ENCODE measurements at regions of chr12 and their contacts with region 1.

Region 1: GRCh38 chr12:19739183-19739776 is 300.0 kb downstream of the AEBP2 start:
- DNase-seq: peak in 1 of 2 experiments; percentile 59
- H3K4me3 ChIP-seq: no peak overlapping the region
- H3K4me3 Mint-ChIP-seq: no peak overlapping the region
- H3K27ac Mint-ChIP-seq: no peak overlapping the region
- H3K4me1 ChIP-seq: no peaks in the 10 kb centered on the region
- H3K4me1 Mint-ChIP-seq: no peaks in the 10 kb centered on the region
- H3K27me3 ChIP-seq: no peaks in the 10 kb centered on the region
- H3K27me3 Mint-ChIP-seq: peaks cover 4% of the 10 kb centered on the region
- CTCF ChIP-seq: peak; percentile 72 to 77

Region 2: DNA sequence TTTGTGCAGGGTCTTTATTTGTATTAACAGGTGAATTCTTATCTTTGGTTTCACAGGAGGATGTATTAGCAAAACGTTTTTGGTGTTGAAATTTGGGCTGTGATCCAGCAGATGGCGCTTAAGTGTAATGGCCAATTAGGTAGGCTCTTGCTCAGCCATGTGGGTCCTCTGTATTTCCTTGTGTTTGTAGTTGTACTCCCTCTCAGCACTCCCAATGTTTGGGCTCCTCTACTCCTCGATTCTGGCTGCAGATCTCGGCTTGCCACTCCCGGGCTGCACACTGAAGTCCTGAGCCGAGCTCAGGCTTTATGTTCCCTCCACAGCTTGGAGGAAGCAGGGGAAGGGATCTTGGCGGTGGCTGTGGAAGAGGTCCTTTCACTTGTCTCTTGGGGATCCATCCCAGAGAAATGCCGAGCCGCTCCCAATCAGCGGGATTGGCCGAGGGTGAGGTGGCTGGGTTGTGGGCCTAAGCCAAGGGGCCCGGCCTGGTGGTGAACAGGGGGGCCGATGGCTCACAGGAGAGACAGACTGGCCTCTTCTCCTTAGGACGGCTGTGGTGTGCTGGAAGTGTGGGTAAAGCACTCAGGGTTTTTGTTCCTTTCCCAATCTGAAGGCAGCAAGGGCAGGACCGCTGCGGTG is 166.2 kb before region 1 on chr12:
- CTCF ChIA-PET with region 1: no interaction called
- POLR2A ChIA-PET with region 1: no interaction called
- intact Hi-C with region 1: no loop called
- DNase-seq: peak; percentile 55 to 62
- H3K4me3 ChIP-seq: no peak overlapping the region
- H3K4me3 Mint-ChIP-seq: no peak overlapping the region
- H3K27ac Mint-ChIP-seq: no peak overlapping the region
- H3K4me1 ChIP-seq: 0 out of 2 replicates have a peak, but pooled peaks cover 6% of the 10 kb centered on the region
- H3K4me1 Mint-ChIP-seq: peaks cover 7% of the 10 kb centered on the region
- H3K27me3 ChIP-seq: no peaks in the 10 kb centered on the region
- H3K27me3 Mint-ChIP-seq: no peaks in the 10 kb centered on the region
- CTCF ChIP-seq: peak; percentile 56 to 76

Region 3: DNA sequence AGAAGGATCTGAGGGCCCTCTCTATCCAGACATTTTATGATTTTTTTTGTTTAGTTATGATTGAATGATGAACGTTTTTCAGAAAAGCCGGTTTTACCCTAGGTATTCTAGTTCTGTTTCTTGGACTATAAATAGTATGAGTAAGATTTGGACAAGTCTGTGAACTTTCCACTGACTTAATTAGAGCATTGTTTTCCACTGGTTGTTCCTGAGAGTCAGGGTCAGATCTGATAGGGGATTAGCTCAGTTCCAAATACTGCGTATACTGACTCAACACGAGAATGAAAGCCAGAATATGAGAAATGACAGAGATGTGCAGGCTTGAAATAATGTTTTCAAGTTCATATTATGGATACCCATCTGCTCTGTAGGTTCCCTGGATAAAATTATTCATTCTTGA is 61.6 kb after region 1 on chr12:
- CTCF ChIA-PET with region 1: no interaction called
- POLR2A ChIA-PET with region 1: no interaction called
- intact Hi-C with region 1: no loop called
- DNase-seq: no peak
- H3K4me3 ChIP-seq: no peak overlapping the region
- H3K4me3 Mint-ChIP-seq: no peak overlapping the region
- H3K27ac Mint-ChIP-seq: no peak overlapping the region
- H3K4me1 ChIP-seq: no peaks in the 10 kb centered on the region
- H3K4me1 Mint-ChIP-seq: no peaks in the 10 kb centered on the region
- H3K27me3 ChIP-seq: no peaks in the 10 kb centered on the region
- H3K27me3 Mint-ChIP-seq: no peaks in the 10 kb centered on the region
- CTCF ChIP-seq: no peak

Region 4: DNA sequence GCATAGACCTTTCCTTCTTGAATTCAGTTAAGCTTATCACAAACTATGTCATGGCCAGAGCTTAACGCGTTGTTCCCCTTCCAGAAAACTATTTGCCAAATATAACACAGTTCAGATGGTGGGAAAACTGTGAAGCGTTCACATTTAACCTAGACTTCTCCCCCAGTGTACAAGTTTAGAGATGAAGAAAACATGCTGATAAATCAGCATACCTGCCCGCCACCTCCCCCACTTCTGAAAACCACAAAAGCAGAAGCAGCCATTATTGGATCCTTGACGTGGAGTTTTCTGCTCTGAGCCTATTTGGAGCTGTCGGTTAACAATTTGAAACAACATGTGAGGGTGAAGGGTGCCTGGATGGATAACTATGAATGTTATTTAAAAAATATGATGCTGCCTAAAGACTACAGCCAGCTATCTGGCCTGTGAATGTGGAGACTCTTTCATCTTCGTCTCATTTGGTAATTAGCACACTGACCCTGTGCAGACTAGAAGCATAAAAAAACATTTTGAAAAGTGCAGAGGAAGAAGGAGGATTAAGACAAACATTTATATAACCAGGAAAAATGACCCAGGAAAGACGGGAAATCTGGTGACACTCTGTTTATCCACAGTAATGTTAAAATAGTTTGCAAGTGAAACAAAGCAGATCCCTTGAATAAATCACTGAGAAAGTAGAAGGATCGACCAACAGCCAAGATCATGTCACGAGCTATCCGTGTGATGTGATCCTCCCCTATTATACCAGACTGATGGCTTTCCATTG is 108.2 kb after region 1 on chr12:
- CTCF ChIA-PET with region 1: no interaction called
- POLR2A ChIA-PET with region 1: no interaction called
- intact Hi-C with region 1: no loop called
- DNase-seq: no peak
- H3K4me3 ChIP-seq: no peak overlapping the region
- H3K4me3 Mint-ChIP-seq: no peak overlapping the region
- H3K27ac Mint-ChIP-seq: no peak overlapping the region
- H3K4me1 ChIP-seq: no peaks in the 10 kb centered on the region
- H3K4me1 Mint-ChIP-seq: peaks cover 7% of the 10 kb centered on the region
- H3K27me3 ChIP-seq: no peaks in the 10 kb centered on the region
- H3K27me3 Mint-ChIP-seq: no peaks in the 10 kb centered on the region
- CTCF ChIP-seq: no peak

Region 5: GRCh38 chr12:19893514-19893913 is 154.2 kb after region 1 on chr12:
- CTCF ChIA-PET with region 1: no interaction called
- POLR2A ChIA-PET with region 1: no interaction called
- intact Hi-C with region 1: loop called (anchors 1 kb)
- DNase-seq: peak in 1 of 2 experiments; percentile 17
- H3K4me3 ChIP-seq: no peak overlapping the region
- H3K4me3 Mint-ChIP-seq: no peak overlapping the region
- H3K27ac Mint-ChIP-seq: no peak overlapping the region
- H3K4me1 ChIP-seq: no peaks in the 10 kb centered on the region
- H3K4me1 Mint-ChIP-seq: no peaks in the 10 kb centered on the region
- H3K27me3 ChIP-seq: no peaks in the 10 kb centered on the region
- H3K27me3 Mint-ChIP-seq: no peaks in the 10 kb centered on the region
- CTCF ChIP-seq: peak; percentile 21 to 31

Region 6: DNA sequence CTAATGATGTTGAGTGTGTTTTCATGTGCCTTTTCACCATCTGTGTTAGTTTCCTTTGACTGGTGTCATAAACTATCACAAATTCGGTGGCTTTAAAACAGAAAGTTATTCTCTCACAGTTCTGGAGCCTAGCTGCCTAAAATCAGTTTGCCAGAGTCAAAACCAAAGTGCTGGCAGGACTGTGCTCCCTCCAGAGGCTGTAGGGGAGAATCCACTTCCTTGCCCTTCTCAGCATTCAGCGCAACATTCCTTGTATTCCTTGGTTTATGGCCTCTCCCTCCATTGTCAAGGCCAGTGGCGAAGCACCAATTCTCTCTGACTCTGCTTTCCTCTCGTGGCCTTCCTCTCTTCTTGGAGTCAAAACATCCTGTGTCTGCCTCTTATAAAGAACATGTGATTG is 454.9 kb after region 1 on chr12:
- CTCF ChIA-PET with region 1: no interaction called
- POLR2A ChIA-PET with region 1: no interaction called
- intact Hi-C with region 1: loop called (anchors 1 kb)
- DNase-seq: peak; percentile 49 to 62
- H3K4me3 ChIP-seq: no peak overlapping the region
- H3K4me3 Mint-ChIP-seq: no peak overlapping the region
- H3K27ac Mint-ChIP-seq: no peak overlapping the region
- H3K4me1 ChIP-seq: peaks cover 11% of the 10 kb centered on the region
- H3K4me1 Mint-ChIP-seq: peaks cover 20% of the 10 kb centered on the region
- H3K27me3 ChIP-seq: no peaks in the 10 kb centered on the region
- H3K27me3 Mint-ChIP-seq: no peaks in the 10 kb centered on the region
- CTCF ChIP-seq: peak; percentile 44 to 69

Region 7: GRCh38 chr12:20220339-20220738 is 481.1 kb after region 1 on chr12:
- CTCF ChIA-PET with region 1: no interaction called
- POLR2A ChIA-PET with region 1: no interaction called
- intact Hi-C with region 1: loop called (anchors 1 kb)
- DNase-seq: peak; percentile 46 to 47
- H3K4me3 ChIP-seq: no peak overlapping the region
- H3K4me3 Mint-ChIP-seq: no peak overlapping the region
- H3K27ac Mint-ChIP-seq: no peak overlapping the region
- H3K4me1 ChIP-seq: no peaks in the 10 kb centered on the region
- H3K4me1 Mint-ChIP-seq: no peaks in the 10 kb centered on the region
- H3K27me3 ChIP-seq: no peaks in the 10 kb centered on the region
- H3K27me3 Mint-ChIP-seq: no peaks in the 10 kb centered on the region
- CTCF ChIP-seq: peak; percentile 41 to 53

Region 8: GRCh38 chr12:20376984-20377383 is 637.7 kb after region 1 on chr12:
- CTCF ChIA-PET with region 1: interaction called, 3 read pairs
- POLR2A ChIA-PET with region 1: no interaction called
- intact Hi-C with region 1: loop called (anchors 1 kb)
- DNase-seq: peak in 1 of 2 experiments; percentile 22
- H3K4me3 ChIP-seq: no peak overlapping the region
- H3K4me3 Mint-ChIP-seq: no peak overlapping the region
- H3K27ac Mint-ChIP-seq: no peak overlapping the region
- H3K4me1 ChIP-seq: peaks cover 4% of the 10 kb centered on the region; the same call in 1 of the 2 replicates
- H3K4me1 Mint-ChIP-seq: no peaks in the 10 kb centered on the region
- H3K27me3 ChIP-seq: no peaks in the 10 kb centered on the region
- H3K27me3 Mint-ChIP-seq: peaks cover 11% of the 10 kb centered on the region
- CTCF ChIP-seq: peak; percentile 14 to 54

Region 9: GRCh38 chr12:20549107-20549719 is 809.9 kb after region 1 on chr12:
- CTCF ChIA-PET with region 1: no interaction called
- POLR2A ChIA-PET with region 1: no interaction called
- intact Hi-C with region 1: loop called (anchors 1 kb)
- DNase-seq: peak; percentile 42 to 60
- H3K4me3 ChIP-seq: no peak overlapping the region
- H3K4me3 Mint-ChIP-seq: no peak overlapping the region
- H3K27ac Mint-ChIP-seq: no peak overlapping the region
- H3K4me1 ChIP-seq: no peaks in the 10 kb centered on the region
- H3K4me1 Mint-ChIP-seq: no peaks in the 10 kb centered on the region
- H3K27me3 ChIP-seq: no peaks in the 10 kb centered on the region
- H3K27me3 Mint-ChIP-seq: peaks cover 3% of the 10 kb centered on the region
- CTCF ChIP-seq: peak; percentile 66 to 74

Region 10: GRCh38 chr12:20601668-20602280 is 862.5 kb after region 1 on chr12:
- CTCF ChIA-PET with region 1: no interaction called
- POLR2A ChIA-PET with region 1: no interaction called
- intact Hi-C with region 1: loop called (anchors 1 kb)
- DNase-seq: peak in 1 of 2 experiments; percentile 17
- H3K4me3 ChIP-seq: no peak overlapping the region
- H3K4me3 Mint-ChIP-seq: no peak overlapping the region
- H3K27ac Mint-ChIP-seq: no peak overlapping the region
- H3K4me1 ChIP-seq: no peaks in the 10 kb centered on the region
- H3K4me1 Mint-ChIP-seq: no peaks in the 10 kb centered on the region
- H3K27me3 ChIP-seq: no peaks in the 10 kb centered on the region
- H3K27me3 Mint-ChIP-seq: peaks cover 2% of the 10 kb centered on the region
- CTCF ChIP-seq: peak; percentile 55 to 64

Measured in Caco-2 (cell line).